Testis (tissue), 5 donors: ENCODE measurements at regions of chr6 and their contacts with region 1.

Region 1: DNA sequence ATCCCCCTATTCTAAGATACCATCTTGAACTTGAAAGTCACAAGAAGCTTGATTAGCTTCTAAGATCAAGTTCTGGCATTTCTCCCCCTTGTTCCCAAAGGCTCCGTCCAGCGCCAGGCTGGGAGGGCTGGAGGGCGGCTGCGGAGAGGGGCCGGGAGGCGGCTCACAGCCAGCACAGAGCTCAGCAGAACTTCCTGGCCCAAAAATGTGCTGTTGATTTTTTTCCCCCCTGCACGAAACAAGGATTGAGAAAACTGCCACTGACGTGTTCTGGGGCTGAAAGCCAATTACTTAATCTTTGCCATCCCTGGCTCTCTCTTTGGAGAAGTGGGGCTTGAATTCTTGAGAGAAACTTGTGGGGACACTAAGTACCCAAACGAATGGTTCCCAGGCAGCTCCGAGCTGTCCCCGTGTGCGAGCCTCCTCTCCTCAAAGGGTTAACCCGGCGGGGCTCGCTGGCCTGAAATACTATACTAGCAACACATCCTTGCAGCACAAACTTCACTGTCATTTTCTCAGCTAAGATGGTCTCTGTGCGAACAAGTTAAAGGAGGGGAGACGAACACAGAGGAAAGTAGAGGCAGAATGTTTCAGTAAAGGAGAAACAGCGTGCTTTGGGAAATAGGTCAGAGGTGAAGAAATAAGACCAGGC is 452 bp downstream of the TRAF3IP2 start:
- DNase-seq: peak; percentile 75
- H3K4me3 ChIP-seq: peak overlapping the region; percentile 59 to 74
- H3K27ac ChIP-seq: peak overlapping the region; percentile 87 to 97
- H3K4me1 ChIP-seq: peaks cover 27% of the 10 kb centered on the region
- H3K27me3 ChIP-seq: no peaks in the 10 kb centered on the region
- CTCF ChIP-seq: no peak
- POLR2A ChIP-seq: no peak

Region 2: GRCh38 chr6:111230351-111231089 is 374.7 kb before region 1 on chr6:
- intact Hi-C with region 1: no loop called
- DNase-seq: no peak
- H3K4me3 ChIP-seq: no peak overlapping the region
- H3K27ac ChIP-seq: no peak overlapping the region
- H3K4me1 ChIP-seq: no peaks in the 10 kb centered on the region
- H3K27me3 ChIP-seq: no peaks in the 10 kb centered on the region
- CTCF ChIP-seq: no peak
- POLR2A ChIP-seq: no peak

Region 3: GRCh38 chr6:111483736-111484632 is 121.2 kb before region 1 on chr6:
- intact Hi-C with region 1: loop called (anchors 5 kb)
- DNase-seq: peak; percentile 97
- H3K4me3 ChIP-seq: peak overlapping the region; percentile 91 to 98
- H3K27ac ChIP-seq: peak overlapping the region; percentile 100
- H3K4me1 ChIP-seq: peaks cover 7% of the 10 kb centered on the region
- H3K27me3 ChIP-seq: no peaks in the 10 kb centered on the region
- CTCF ChIP-seq: no peak
- POLR2A ChIP-seq: no peak

Region 4: GRCh38 chr6:111552241-111552744 is 52.9 kb before region 1 on chr6:
- intact Hi-C with region 1: loop called (anchors 10 kb)
- DNase-seq: peak; percentile 89
- H3K4me3 ChIP-seq: no peak overlapping the region
- H3K27ac ChIP-seq: peak overlapping the region; percentile 16 to 65
- H3K4me1 ChIP-seq: peaks cover 22% of the 10 kb centered on the region
- H3K27me3 ChIP-seq: no peaks in the 10 kb centered on the region
- CTCF ChIP-seq: no peak
- POLR2A ChIP-seq: no peak